Endothelial cell of umbilical vein (primary cell): ENCODE measurements at regions of chr12 and their contacts with region 1.

Region 1: GRCh38 chr12:57590536-57591479 is at the start of gene PIP4K2C:
- DNase-seq: peak; percentile 27
- H3K4me3 ChIP-seq: peak within 1 kb of the TSS; percentile 49 to 83 (median 60)
- H3K27ac ChIP-seq: no peak within 1 kb of the TSS
- H3K4me1 ChIP-seq: peaks cover 5% of the 10 kb centered on the region
- H3K27me3 ChIP-seq: peaks cover 8 to 10% of the 10 kb centered on the region in 2 experiments
- CTCF ChIP-seq: no peak
- POLR2A ChIP-seq: no peak
- total RNA-seq, gene PIP4K2C: 9.1 and 11.5 TPM in 2 replicates

Region 2: GRCh38 chr12:56751712-56752598 is 838.9 kb before region 1 on chr12 and contains the start of gene PRIM1:
- CTCF ChIA-PET with region 1: no interaction called
- POLR2A ChIA-PET with region 1: no interaction called
- dilution Hi-C with region 1: no loop called
- intact Hi-C with region 1: no loop called
- DNase-seq: peak; percentile 81
- H3K4me3 ChIP-seq: peak within 1 kb of the TSS; percentile 52 to 98 (median 94)
- H3K27ac ChIP-seq: peak within 1 kb of the TSS; percentile 75
- H3K4me1 ChIP-seq: peaks cover 11% of the 10 kb centered on the region
- H3K27me3 ChIP-seq: no peaks in the 10 kb centered on the region
- CTCF ChIP-seq: no peak
- POLR2A ChIP-seq: peak; percentile 62
- total RNA-seq, gene PRIM1: 12.1 and 13.4 TPM in 2 replicates

Region 3: DNA sequence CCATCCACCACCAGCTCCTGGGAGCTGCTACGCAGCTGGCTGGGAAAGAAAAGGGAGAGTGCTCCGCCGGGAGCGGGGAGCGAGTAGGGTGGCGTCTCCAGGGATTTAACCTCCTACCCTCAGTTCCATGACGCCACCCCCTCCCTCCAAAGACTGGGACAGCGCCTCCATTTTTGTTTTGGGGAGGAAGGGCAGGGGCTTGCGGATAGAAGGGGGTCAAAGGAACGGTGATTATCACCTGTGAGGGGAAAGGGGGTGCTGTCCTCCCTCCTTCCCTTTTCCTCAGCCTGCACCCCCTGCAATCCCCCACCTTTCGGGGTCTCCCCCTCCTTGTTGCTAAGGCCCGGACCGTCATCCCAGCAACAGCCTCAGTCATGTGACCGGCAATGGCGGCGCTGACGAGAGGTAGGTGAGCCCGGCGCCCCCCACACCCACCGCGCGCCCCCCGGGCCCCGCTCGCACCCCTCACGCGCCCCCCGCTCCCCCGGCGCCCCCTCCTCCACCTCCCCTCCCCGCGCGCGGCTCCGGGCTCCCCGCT is 13.7 kb after region 1 on chr12 and contains the start of gene DTX3:
- CTCF ChIA-PET with region 1: interaction called, 4 read pairs
- POLR2A ChIA-PET with region 1: no interaction called
- dilution Hi-C with region 1: no loop called
- intact Hi-C with region 1: loop called (anchors 1 kb)
- DNase-seq: peak; percentile 18
- H3K4me3 ChIP-seq: peak within 1 kb of the TSS; percentile 48 to 72 (median 56)
- H3K27ac ChIP-seq: peak within 1 kb of the TSS; percentile 23
- H3K4me1 ChIP-seq: peaks cover 6% of the 10 kb centered on the region
- H3K27me3 ChIP-seq: peaks cover 0 to 4% of the 10 kb centered on the region in 2 experiments
- CTCF ChIP-seq: no peak
- POLR2A ChIP-seq: no peak
- total RNA-seq, gene DTX3: 25.9 and 34.5 TPM in 2 replicates

Region 4: GRCh38 chr12:57611108-57611809 is 20.5 kb after region 1 on chr12 and contains the start of gene ARHGEF25:
- CTCF ChIA-PET with region 1: interaction called, 54 read pairs
- POLR2A ChIA-PET with region 1: no interaction called
- dilution Hi-C with region 1: no loop called
- intact Hi-C with region 1: loop called (anchors 2 kb)
- DNase-seq: peak; percentile 24
- H3K4me3 ChIP-seq: peak within 1 kb of the TSS; percentile 46 to 67 (median 54)
- H3K27ac ChIP-seq: no peak within 1 kb of the TSS
- H3K4me1 ChIP-seq: peaks cover 3% of the 10 kb centered on the region
- H3K27me3 ChIP-seq: peaks cover 5 to 12% of the 10 kb centered on the region in 2 experiments
- CTCF ChIP-seq: no peak
- POLR2A ChIP-seq: peak; percentile 56
- total RNA-seq, gene ARHGEF25: 4.7 and 7.4 TPM in 2 replicates